ENCODE measurements at regions of chr10 and their contacts with region 1.

Region 1: DNA sequence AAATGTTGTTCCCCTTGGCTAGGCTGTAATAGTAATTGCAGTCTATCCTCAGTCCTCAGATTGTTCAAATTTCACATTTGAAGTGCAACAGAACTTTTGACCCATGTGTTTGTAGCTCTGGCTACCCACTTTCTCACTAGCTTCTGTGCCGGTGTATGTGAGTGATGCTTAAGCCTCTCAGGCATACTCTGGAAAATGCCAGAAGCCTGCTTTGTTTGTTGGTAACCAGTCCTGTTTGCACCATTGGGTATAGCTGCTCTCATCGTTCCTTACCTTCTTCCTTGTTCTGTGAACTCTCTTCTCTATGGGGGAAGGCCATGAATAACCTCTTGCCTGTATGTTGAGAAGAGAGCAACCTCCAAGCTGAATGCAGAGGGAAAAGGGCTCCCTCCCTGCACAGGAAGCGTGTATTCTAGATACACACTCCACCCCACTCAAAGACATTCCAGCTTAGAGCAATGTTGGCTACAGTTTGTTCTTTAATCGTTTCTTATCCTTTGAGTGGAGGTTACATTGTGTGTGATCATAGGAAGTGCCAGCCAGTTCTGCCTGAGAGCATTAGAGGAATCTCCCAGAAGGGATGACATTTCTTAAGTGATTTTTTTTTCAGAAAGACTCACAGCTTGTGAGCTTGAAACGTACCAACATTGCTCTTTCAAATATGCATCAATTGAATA is 40.5 kb downstream of the C1QL3 start:
- DNase-seq: no peak
- ATAC-seq: no peak
- H3K4me3 ChIP-seq: no peak overlapping the region
- H3K27ac ChIP-seq: no peak overlapping the region
- H3K4me1 ChIP-seq: no peaks in the 10 kb centered on the region
- H3K27me3 ChIP-seq: no peaks in the 10 kb centered on the region
- CTCF ChIP-seq: no peak
- POLR2A ChIP-seq: no peak
- RAD21 ChIP-seq: no peak

Region 2: DNA sequence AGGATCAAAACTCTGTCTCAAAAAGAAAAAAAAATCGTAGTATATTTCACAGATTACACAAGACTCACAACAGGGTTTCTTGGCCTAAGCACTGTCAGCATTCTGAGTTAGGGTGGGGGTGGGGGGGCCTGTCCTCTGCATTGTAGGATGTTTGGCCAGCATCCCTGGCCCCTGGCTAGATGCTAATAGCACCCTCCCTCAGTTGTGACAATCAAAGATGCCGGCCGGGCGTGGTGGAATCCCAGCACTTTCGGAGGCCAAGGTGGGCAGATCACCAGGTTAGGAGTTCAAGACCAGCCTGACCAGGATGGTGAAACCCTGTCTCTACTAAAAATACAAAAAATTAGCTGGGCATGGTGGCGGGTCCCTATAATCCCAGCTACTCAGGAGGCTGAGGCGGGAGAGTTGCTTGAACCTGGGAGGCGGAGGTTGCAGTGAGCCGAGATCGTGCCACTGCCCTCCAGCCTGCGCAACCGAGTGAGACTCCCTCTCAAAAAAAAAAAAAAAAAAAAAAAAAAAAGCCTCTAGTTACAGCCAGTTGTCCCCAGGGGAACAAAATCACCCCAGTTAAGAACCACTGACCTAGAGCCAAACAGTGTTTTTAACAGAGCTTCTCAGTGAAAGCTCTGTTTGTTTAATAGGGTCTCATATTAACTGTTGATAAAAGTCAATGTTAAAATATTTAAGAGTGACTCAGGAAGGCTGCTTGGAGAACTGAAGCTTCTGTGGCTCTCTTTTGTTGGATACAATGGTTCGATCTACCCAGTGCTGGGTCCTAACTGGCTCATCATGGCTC is 949.1 kb before region 1 on chr10:
- CTCF ChIA-PET with region 1: no interaction called
- POLR2A ChIA-PET with region 1: interaction called, 13 read pairs
- dilution Hi-C with region 1: no loop called
- in situ Hi-C with region 1: no loop called
- intact Hi-C with region 1: no loop called
- DNase-seq: no peak
- ATAC-seq: no peak
- H3K4me3 ChIP-seq: no peak overlapping the region
- H3K27ac ChIP-seq: no peak overlapping the region
- H3K4me1 ChIP-seq: no peaks in the 10 kb centered on the region
- H3K27me3 ChIP-seq: peaks cover 11% of the 10 kb centered on the region; the same call in 1 of the 2 replicates
- CTCF ChIP-seq: no peak
- POLR2A ChIP-seq: no peak
- RAD21 ChIP-seq: no peak

Region 3: GRCh38 chr10:16258291-16259040 is 222.7 kb before region 1 on chr10:
- CTCF ChIA-PET with region 1: no interaction called
- POLR2A ChIA-PET with region 1: no interaction called
- dilution Hi-C with region 1: no loop called
- in situ Hi-C with region 1: no loop called
- intact Hi-C with region 1: no loop called
- DNase-seq: no peak
- ATAC-seq: no peak
- H3K4me3 ChIP-seq: no peak overlapping the region
- H3K27ac ChIP-seq: no peak overlapping the region
- H3K4me1 ChIP-seq: no peaks in the 10 kb centered on the region
- H3K27me3 ChIP-seq: no peaks in the 10 kb centered on the region
- CTCF ChIP-seq: no peak
- POLR2A ChIP-seq: no peak
- RAD21 ChIP-seq: no peak

Measured in IMR-90 (cell line).